ENCODE measurements at regions of chr2 and their contacts with region 1.

Region 1: DNA sequence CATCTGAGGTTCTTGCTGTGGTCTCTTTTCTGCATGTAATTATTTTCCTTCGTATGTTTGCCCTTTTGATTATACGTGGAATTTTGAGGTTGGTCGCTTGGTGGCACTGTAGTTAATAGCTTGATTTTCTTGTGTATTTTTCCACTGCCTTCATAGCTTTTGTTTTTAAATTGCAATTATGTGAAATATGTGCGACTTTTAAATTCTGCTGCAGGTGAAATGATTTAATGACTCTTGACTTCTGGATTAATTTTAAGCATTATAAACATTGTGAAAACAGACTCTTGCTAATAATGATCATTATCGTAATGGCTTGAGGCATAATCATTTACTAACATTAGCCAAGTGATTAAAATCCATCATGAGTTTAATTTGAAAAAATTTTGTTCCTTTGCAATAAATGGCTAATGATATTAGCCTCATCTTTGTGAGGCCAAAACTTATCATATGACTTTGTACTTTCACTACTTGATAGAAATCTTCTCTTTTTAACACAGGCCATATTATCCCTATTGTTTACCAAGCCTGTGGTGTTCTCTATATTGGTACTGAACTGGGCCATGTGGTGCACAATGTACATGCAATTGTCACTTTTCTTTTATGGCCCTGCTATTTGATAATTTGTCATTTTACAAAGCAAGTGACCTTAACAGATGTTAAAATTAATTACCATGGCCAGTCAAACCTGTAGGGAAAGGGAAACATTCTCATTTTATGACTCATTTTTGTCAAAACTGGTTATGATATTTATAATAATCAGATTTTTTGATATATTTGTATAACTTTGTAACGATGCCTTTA is 62.8 kb upstream of the NEUROD1 start:
- DNase-seq: no peak
- H3K4me3 Mint-ChIP-seq: no peak overlapping the region
- H3K27ac Mint-ChIP-seq: no peak overlapping the region
- H3K4me1 Mint-ChIP-seq: no peaks in the 10 kb centered on the region
- H3K27me3 Mint-ChIP-seq: peaks cover 12% of the 10 kb centered on the region

Region 2: GRCh38 chr2:181904022-181904632 is 161.0 kb after region 1 on chr2:
- intact Hi-C with region 1: loop called (anchors 1 kb)
- DNase-seq: no peak
- H3K4me3 Mint-ChIP-seq: no peak overlapping the region
- H3K27ac Mint-ChIP-seq: no peak overlapping the region
- H3K4me1 Mint-ChIP-seq: peaks cover 21% of the 10 kb centered on the region
- H3K27me3 Mint-ChIP-seq: no peaks in the 10 kb centered on the region

Region 3: GRCh38 chr2:181953881-181954537 is 210.9 kb after region 1 on chr2:
- intact Hi-C with region 1: loop called (anchors 1 kb)
- DNase-seq: peak; percentile 38
- H3K4me3 Mint-ChIP-seq: peak overlapping the region; percentile 47
- H3K27ac Mint-ChIP-seq: no peak overlapping the region
- H3K4me1 Mint-ChIP-seq: peaks cover 21% of the 10 kb centered on the region
- H3K27me3 Mint-ChIP-seq: peaks cover 24% of the 10 kb centered on the region

Region 4: GRCh38 chr2:182077451-182078142 is 334.5 kb after region 1 on chr2:
- intact Hi-C with region 1: loop called (anchors 1 kb)
- DNase-seq: no peak
- H3K4me3 Mint-ChIP-seq: no peak overlapping the region
- H3K27ac Mint-ChIP-seq: no peak overlapping the region
- H3K4me1 Mint-ChIP-seq: no peaks in the 10 kb centered on the region
- H3K27me3 Mint-ChIP-seq: peaks cover 4% of the 10 kb centered on the region

Region 5: GRCh38 chr2:182650704-182651103 is 907.6 kb after region 1 on chr2:
- intact Hi-C with region 1: loop called (anchors 2 kb)
- DNase-seq: no peak
- H3K4me3 Mint-ChIP-seq: peak overlapping the region; percentile 17
- H3K27ac Mint-ChIP-seq: no peak overlapping the region
- H3K4me1 Mint-ChIP-seq: peaks cover 24% of the 10 kb centered on the region
- H3K27me3 Mint-ChIP-seq: peaks cover 3% of the 10 kb centered on the region

Measured in activated T-helper 1 cell treated with anti-CD3 and anti-CD28 coated beads, Interleukin-12 subunit alpha, Interleukin-12 subunit beta, Interleukin-2, Interleukin-4 antibody, amounts not matched to agents 30 ng/mL and 10 ng/mL and 1 ng/mL, durations not matched to agents 14 hours and 24 hours and 36 hours (primary cell).